Vagina (tissue), 2 donors: ENCODE measurements at regions of chr2 and their contacts with region 1.

Region 1: DNA sequence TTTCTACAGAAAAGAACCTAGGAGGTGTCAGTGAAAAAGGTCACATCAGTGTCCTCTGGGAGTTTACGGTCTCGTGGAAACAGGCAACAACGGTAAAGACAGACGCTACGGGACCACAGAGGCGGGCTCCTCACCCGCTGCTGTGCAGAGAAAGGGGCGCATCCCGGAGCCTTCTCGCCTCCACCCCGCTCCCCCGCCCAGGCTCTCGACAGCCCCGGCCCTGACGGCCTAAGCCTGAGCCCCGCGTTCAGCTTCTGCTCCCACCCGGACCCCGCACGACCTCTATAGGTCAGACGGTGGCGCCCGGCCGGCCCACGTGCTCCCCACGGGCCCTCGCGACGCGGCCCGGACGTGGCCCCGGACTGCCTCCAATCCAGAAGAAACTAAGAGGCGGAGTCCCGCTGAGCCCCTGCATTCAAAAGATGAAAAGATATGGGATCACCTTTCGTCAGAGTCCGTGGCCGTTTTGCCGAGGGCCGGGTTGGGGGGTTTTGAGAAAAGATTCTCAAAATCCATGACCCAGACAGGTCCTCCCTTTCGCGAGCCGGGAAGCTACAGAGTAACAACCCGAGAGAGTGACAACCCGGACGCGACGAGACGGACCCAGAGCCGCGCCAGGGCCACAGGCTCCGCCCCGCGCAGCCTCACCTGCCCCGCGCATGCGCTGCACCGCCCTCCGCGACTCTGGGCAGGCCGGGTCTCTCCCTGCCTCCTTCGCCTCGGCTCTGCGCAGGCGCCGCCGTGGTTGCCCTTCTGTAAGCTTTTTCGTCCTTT is at the start of gene ZC3H8:
- DNase-seq: peak in 1 of 2 donors; percentile 92
- H3K4me3 ChIP-seq: peak within 1 kb of the TSS; percentile 64 to 79
- H3K27ac ChIP-seq: peak within 1 kb of the TSS; percentile 84
- H3K4me1 ChIP-seq: peaks cover 18% of the 10 kb centered on the region
- H3K27me3 ChIP-seq: no peaks in the 10 kb centered on the region
- CTCF ChIP-seq: peak in 1 of 3 experiments; percentile 14
- POLR2A ChIP-seq: peak in 1 of 2 donors; percentile 84
- total RNA-seq, gene ZC3H8: 15.7 TPM

Region 2: DNA sequence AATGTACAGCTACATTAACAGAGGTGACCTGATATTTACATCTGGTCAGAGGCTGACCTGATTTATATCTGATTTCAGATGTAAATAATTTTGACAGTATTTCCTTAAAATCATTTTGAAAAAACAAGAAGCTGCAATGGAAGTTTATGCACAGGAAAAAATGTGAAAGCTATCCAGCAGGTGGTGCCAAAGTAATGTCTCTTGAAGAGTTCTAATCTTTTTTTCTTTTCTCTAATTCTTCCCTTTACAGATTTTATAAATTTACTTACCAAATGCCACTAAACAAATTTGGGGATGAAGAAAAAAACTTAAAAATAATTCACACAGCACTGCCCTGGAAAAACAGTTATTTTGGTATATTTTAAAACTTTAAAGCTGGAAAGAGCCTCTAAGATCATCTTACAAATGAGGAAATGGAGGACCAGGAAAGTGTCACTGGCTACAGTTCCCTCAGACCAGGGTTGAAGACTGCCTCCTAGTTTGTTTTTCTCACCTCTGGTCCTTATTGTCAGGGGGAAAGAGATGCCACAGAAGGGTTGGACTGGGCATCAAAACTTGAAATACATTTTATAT is 132.9 kb before region 1 on chr2:
- intact Hi-C with region 1: loop called (anchors 10 kb)
- DNase-seq: no peak
- H3K4me3 ChIP-seq: no peak overlapping the region
- H3K27ac ChIP-seq: no peak overlapping the region
- H3K4me1 ChIP-seq: no peaks in the 10 kb centered on the region
- H3K27me3 ChIP-seq: no peaks in the 10 kb centered on the region
- CTCF ChIP-seq: peak; percentile 30 to 40 (median 35)
- POLR2A ChIP-seq: no peak

Region 3: DNA sequence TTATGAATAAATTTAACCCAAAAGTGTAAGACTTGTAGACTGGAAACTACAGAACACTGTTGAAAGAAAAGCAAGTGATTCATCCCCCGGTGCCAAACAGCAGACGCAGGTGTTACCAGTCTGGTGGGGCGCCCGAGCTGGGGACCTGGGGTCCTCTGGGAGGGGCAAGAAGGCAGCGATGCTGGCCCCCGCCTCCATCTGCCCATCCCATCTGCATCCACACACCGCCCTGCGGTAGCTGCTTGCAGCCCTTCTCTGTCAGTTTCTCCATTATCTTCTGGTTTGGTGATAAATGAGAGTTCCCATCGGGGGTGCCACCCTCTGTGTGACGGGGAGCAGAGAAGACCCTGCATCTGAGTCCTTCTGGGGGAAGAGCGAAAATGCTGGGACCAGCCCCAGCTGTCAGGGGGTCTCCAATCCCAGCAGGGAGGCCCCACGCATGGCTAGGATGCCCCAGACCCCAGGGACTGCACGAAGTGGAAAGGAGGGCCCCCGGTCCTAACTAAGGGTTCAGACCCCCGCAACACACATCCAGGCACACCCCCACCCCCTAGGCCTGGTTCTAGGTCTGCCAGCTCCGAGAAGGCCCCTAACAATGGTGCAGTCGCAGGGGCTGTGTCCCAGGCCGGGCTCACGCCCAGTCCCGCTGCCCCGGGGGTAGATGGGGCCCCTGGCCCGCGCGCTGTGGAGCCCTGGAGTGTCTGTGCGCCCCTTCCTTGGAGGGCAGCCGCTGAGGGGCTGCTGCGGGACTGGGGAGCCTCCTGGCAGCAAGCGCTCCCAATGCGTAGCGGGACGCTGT is 179.5 kb after region 1 on chr2:
- intact Hi-C with region 1: loop called (anchors 10 kb)
- DNase-seq: peak; percentile 84 to 86
- H3K4me3 ChIP-seq: no peak overlapping the region
- H3K27ac ChIP-seq: no peak overlapping the region
- H3K4me1 ChIP-seq: peaks cover 6% of the 10 kb centered on the region
- H3K27me3 ChIP-seq: no peaks in the 10 kb centered on the region
- CTCF ChIP-seq: no peak
- POLR2A ChIP-seq: no peak